Heart left ventricle (tissue), 16 donors: ENCODE measurements at regions of chr12 and their contacts with region 1.

Region 1: DNA sequence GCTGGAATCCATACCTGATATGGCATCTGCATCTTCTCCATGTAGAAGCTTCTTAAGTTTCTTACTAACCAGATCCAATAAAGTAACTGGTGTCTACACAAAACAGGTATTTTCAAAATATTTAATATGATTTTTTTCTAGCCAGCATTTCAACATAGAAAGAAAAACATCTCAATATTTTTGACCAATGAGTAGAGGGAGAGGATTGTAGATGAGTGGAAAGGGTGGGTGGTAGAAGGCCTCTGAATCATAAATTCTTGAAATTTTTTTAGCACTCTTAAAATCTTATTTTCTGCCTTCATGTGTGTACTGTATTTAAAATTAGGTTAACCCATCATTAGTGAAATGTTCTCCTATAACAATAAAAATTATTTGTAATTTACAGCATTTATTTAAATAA is 18.0 kb downstream of the DEPDC4 start:
- DNase-seq: no peak
- ATAC-seq: no peak
- H3K4me3 ChIP-seq: no peak overlapping the region
- H3K27ac ChIP-seq: no peak overlapping the region
- H3K4me1 ChIP-seq: no peaks in the 10 kb centered on the region
- H3K27me3 ChIP-seq: no peaks in the 10 kb centered on the region
- CTCF ChIP-seq: no peak
- POLR2A ChIP-seq: no peak

Region 2: DNA sequence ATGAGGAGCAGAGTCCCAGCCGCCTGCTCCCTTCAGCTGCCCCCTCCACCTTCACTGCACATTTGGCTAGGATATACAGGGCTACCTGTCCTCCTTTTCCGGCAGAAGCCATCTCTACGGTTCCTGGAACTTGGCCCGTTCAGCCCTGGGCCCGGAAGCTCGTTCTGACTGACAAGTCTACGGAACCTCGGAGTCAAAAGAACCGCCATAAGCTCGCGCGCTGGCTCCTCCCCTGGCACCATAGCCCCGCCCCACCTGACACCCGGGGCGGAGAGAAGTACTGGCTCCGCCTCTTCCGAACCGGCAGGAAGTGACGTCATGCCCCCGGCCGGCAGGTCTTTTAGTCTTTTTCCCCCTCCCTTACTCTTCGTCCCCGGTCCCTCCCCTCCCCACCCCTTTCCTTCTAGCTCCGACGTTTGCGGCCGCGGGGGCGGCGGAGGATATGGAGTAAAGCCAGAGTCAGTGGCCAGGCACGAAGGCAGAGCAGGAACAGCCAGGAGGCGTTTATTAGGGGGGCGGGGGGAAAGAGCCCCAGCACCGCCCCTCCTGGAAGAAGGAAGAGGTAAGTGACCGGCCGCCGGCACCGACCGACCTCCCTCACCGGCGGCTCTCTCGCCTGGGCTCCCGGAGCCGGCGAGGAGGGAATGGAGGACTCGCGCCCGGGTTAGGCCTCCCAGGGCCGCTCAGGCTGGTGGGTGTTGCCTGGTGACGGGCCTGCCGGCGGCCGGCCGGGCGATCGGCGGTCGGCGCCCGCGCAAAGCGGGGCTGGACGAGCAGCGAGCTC is 18.1 kb after region 1 on chr12 and contains the starts of genes DEPDC4 and SCYL2:
- intact Hi-C with region 1: no loop called
- DNase-seq: peak; percentile 95 to 97 (median 96)
- ATAC-seq: peak; percentile 97 to 98 (median 98)
- H3K4me3 ChIP-seq: peak within 1 kb of the TSS; percentile 74 to 99 (median 92)
- H3K27ac ChIP-seq: peak within 1 kb of the TSS; percentile 89 to 99 (median 97)
- H3K4me1 ChIP-seq: peaks cover 15 to 46% (median 27%) of the 10 kb centered on the region in 12 donors
- H3K27me3 ChIP-seq: no peaks in the 10 kb centered on the region
- CTCF ChIP-seq: peak in 4 of 12 donors; percentile 14 to 36 (median 22)
- POLR2A ChIP-seq: peak in 1 of 2 donors; percentile 59
- total RNA-seq, gene DEPDC4: 0.33 to 1.3 (median 0.58) TPM in 7 of 9 donors, not detected in the others
- total RNA-seq, gene SCYL2: 23.7 to 41.3 (median 33.8) TPM

Region 3: DNA sequence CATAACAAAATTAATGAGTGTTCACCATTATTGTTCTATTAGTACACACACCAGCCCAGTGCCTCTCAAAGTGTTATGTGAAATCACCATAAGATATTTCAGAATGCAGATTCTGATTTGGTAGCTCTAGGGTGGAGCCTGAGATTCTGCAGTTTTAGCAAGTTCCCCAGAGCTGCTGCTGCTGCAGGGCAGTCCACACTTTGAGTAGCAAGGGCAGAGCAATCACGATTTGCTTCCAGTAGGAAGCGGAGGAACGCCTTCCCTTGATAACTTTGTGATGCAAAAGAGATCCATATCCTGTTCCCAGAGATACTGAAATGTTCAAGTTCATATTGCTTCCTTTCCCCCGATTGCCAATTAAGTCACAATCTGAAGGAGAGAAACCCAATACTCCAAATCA is 165.9 kb after region 1 on chr12:
- intact Hi-C with region 1: no loop called
- DNase-seq: no peak
- ATAC-seq: no peak
- H3K4me3 ChIP-seq: no peak overlapping the region
- H3K27ac ChIP-seq: no peak overlapping the region
- H3K4me1 ChIP-seq: no peaks in the 10 kb centered on the region
- H3K27me3 ChIP-seq: no peaks in the 10 kb centered on the region
- CTCF ChIP-seq: no peak
- POLR2A ChIP-seq: no peak

Region 4: DNA sequence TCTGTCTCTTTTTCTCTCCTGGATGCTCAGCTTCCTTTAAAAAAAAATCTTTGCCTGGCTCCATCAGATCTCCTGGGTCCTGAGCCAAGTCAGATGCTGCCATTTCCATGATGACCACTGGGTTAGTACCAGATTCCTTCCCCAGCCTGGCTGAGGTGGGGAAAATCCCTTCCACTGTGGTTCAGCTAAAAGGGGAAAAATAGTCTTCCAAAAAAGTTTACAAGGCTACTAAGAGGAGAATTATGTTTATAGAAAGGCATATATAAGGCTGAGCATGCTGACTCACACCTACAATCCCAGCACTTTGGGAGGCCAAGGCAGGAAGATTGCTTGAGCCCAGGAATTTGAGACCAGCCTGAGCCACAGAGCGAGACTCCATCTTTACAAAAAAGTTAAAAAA is 296.2 kb after region 1 on chr12:
- intact Hi-C with region 1: loop called in 1 of 10 experiments (anchors 10 kb)
- DNase-seq: no peak
- ATAC-seq: no peak
- H3K4me3 ChIP-seq: no peak overlapping the region
- H3K27ac ChIP-seq: no peak overlapping the region
- H3K4me1 ChIP-seq: no peaks in the 10 kb centered on the region
- H3K27me3 ChIP-seq: no peaks in the 10 kb centered on the region
- CTCF ChIP-seq: no peak
- POLR2A ChIP-seq: no peak